Head of caudate nucleus (tissue), 42 donors: ENCODE measurements at regions of chr5 and their contacts with region 1.

Region 1: GRCh38 chr5:134411546-134412266 is at the start of gene CDKN2AIPNL:
- DNase-seq: peak; percentile 87 to 99 (median 97)

Region 2: GRCh38 chr5:134370871-134371833 is 40.6 kb before region 1 on chr5 and contains the start of gene UBE2B:
- intact Hi-C with region 1: loop called (anchors 5 kb)
- DNase-seq: peak; percentile 95 to 100 (median 99)